ENCODE measurements at regions of chr17 and their contacts with region 1.

Region 1: GRCh38 chr17:34998205-34998604 is 17.9 kb downstream of the LIG3 start:
- DNase-seq: peak; percentile 70
- H3K4me3 ChIP-seq: no peak overlapping the region
- H3K27ac ChIP-seq: no peak overlapping the region
- H3K4me1 ChIP-seq: no peaks in the 10 kb centered on the region
- H3K27me3 ChIP-seq: no peaks in the 10 kb centered on the region
- CTCF ChIP-seq: peak; percentile 60

Region 2: DNA sequence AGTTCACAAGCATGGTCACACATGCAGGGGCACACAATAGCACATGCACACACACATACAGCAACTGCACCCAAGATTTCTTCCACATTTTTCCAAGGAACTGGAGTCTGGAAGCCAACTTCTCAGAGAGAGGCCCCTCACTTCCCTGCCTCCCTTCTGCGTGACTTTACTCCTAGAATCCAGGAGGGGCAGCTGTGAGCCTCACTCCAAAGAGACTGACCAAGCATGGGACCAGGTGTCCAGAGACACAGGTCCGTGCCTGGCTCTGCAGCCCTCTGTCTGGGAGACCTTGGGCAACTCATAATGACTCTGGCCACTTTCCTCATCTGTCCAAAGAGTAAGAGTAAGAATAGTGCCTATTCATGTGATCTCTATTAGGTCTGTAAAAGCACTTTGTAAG is 523.5 kb before region 1 on chr17:
- CTCF ChIA-PET with region 1: no interaction called
- POLR2A ChIA-PET with region 1: no interaction called
- intact Hi-C with region 1: no loop called
- DNase-seq: no peak
- H3K4me3 ChIP-seq: no peak overlapping the region
- H3K27ac ChIP-seq: no peak overlapping the region
- H3K4me1 ChIP-seq: no peaks in the 10 kb centered on the region
- H3K27me3 ChIP-seq: no peaks in the 10 kb centered on the region
- CTCF ChIP-seq: no peak

Region 3: DNA sequence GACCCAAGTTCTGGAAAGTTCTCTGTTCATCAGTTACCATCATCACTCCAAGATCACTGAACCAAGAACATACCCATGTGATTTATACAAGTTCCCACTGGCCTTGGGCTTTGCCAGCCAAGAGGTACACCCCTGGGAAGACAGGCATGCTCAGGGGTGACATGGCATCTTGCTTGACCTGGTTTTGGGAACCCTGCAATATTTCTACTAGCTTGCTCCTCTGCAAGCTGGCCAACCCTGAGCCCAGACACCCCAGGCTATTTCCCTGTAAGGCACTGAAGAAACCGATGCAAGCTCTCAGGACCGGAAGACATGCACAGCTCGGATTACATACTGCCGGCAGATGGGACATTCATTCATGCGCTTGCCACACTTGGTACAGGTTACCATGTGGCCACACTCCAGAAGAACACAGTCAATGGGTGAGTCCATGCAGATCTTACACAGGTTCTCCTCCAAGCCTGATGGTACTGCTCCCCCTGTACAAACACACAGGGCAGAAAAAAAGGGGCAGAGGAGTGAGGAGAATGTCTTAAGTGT is 13.5 kb after region 1 on chr17:
- CTCF ChIA-PET with region 1: no interaction called
- POLR2A ChIA-PET with region 1: no interaction called
- intact Hi-C with region 1: no loop called
- DNase-seq: no peak
- H3K4me3 ChIP-seq: no peak overlapping the region
- H3K27ac ChIP-seq: no peak overlapping the region
- H3K4me1 ChIP-seq: no peaks in the 10 kb centered on the region
- H3K27me3 ChIP-seq: no peaks in the 10 kb centered on the region
- CTCF ChIP-seq: no peak

Region 4: GRCh38 chr17:35089586-35090296 is 91.5 kb after region 1 on chr17:
- CTCF ChIA-PET with region 1: no interaction called
- POLR2A ChIA-PET with region 1: no interaction called
- intact Hi-C with region 1: loop called (anchors 1 kb)
- DNase-seq: no peak
- H3K4me3 ChIP-seq: peak overlapping the region; percentile 63
- H3K27ac ChIP-seq: peak overlapping the region; percentile 31
- H3K4me1 ChIP-seq: no peaks in the 10 kb centered on the region
- H3K27me3 ChIP-seq: no peaks in the 10 kb centered on the region
- CTCF ChIP-seq: no peak

Region 5: DNA sequence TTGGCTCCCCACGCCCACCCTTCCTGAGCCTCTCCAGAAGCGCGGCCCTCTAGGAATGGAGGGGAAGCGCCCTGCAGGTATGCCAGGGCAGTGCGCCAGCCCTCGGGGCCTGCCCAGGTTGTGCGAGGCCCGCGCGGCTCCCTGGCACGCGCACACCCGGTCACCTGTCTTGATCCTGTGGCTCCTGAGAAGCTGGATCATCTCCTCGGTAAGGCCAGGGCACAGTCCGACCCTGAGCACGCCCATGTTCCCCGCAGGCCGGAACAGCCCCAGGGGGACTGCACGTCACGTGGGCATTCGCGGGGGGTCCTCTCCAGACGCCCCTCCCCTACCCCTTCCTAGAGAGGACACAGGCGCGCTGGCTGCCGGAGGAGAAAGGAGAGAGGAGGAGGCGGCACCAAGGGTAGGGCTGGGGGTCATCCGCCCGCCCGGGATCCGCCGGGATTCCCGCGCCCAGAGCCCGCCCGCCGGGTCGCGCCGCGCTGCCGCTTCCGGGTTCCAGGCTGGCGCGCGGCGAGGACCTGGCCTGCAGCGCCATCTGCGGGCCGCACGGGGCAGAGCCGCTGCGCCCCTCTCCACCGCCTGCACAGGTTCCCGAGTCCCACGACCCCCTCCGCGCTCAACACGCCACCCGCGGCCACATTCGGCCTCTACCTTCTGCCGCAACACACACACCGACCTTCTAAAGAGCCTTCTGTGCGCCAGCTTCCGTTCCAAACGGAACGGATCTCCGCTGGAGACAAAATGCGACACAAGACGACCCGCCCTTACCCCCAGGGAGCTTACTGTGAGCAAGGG is 121.4 kb after region 1 on chr17 and contains the start of gene RAD51D:
- CTCF ChIA-PET with region 1: interaction called, 5 read pairs
- POLR2A ChIA-PET with region 1: no interaction called
- intact Hi-C with region 1: loop called (anchors 1 kb)
- DNase-seq: peak; percentile 73
- H3K4me3 ChIP-seq: peak within 1 kb of the TSS; percentile 70
- H3K27ac ChIP-seq: peak within 1 kb of the TSS; percentile 77
- H3K4me1 ChIP-seq: no peaks in the 10 kb centered on the region
- H3K27me3 ChIP-seq: no peaks in the 10 kb centered on the region
- CTCF ChIP-seq: peak; percentile 64
- total RNA-seq, gene RAD51D: 10.2 and 12.1 TPM in 2 replicates

Measured in A673 (cell line).